AG04449 (cell line): ENCODE measurements at regions of chr9 and their contacts with region 1.

Region 1: DNA sequence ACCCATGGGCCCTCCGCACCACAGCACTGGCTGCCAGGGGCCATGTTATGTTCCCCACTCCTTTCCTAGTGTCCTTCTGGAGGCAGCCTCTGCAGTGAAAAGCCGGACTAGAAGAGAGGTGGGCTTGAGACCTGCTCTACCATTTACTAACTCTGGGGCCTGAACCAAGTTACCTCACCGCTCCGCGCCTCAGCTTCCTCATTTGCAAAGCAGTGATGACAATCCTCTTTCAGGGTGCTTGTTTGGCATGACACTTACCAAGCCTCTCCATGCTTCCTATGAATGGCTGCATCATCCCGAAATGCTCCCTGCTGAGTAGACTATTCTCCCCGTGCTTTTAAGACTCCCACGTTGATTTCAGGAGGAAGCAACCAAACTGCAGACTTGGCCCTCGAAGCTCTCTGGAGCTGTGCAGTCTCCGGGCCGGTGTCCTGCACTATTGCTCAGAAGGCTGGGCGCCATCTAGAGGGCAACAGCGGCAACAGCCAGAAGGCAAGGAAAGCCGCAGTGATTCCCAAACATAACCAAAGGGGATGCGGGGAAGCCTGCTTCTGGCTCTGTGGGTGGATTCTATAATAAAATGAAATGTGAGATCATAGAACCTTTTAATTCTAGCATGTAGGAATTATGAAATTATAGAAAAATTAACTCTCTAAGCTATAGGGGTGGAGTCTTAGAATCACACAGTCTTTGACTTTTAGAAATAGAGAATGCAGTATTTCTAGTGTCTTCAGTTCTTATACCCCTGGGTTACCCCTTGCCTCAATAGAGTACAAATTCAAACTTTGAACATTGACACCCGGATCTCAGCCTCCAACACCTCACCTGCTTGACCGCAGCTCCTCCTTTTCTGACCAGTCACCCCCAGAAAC is 599.8 kb upstream of the BRINP1 start:
- DNase-seq: peak; percentile 28
- H3K4me3 ChIP-seq: no peak overlapping the region
- CTCF ChIP-seq: peak; percentile 98

Region 2: DNA sequence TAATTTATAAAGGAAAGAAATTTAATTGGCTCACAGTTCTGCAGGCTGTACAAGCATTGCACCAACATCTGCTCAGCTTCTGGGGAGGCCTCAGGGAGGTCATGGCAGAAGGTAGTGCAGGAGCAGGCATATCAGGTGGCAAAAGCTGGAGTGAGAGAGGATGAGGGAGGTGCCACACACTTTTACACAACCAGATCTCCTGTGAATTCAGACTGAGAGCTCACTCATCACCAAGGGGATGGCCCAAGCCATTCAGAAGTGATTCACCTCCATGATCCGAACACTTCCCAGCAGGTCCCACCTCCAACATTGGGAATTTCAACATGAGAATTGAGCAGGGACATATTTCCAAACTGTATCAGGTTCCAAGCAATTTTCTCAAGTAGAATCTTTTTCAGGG is 515.1 kb before region 1 on chr9:
- CTCF ChIA-PET with region 1: no interaction called
- POLR2A ChIA-PET with region 1: no interaction called
- DNase-seq: no peak
- H3K4me3 ChIP-seq: no peak overlapping the region
- CTCF ChIP-seq: no peak

Region 3: GRCh38 chr9:119556129-119556875 is 412.8 kb before region 1 on chr9:
- CTCF ChIA-PET with region 1: interaction called, 97 read pairs
- POLR2A ChIA-PET with region 1: no interaction called
- DNase-seq: no peak
- H3K4me3 ChIP-seq: peak overlapping the region; percentile 50
- CTCF ChIP-seq: peak; percentile 93

Region 4: DNA sequence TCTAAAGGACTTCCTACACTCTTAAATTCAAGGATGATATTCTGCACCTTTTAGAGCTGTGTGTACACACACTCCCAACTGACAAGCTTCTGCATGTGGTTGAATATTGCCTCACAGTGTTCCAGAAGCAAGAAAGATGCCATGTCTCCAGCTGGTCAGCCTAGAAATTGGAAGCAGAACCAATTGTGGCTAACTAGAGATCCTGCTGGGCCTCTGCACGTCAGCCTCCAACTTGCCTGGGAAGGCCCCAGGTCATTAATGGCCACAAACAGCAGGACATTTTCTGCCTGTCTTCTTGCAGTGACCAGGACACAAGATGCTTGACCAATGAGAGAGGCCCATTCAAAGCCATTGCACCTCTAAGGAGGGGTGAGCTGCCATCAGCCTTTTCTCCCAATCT is 28.0 kb before region 1 on chr9:
- CTCF ChIA-PET with region 1: interaction called, 22 read pairs
- POLR2A ChIA-PET with region 1: no interaction called
- DNase-seq: no peak
- H3K4me3 ChIP-seq: no peak overlapping the region
- CTCF ChIP-seq: no peak

Region 5: DNA sequence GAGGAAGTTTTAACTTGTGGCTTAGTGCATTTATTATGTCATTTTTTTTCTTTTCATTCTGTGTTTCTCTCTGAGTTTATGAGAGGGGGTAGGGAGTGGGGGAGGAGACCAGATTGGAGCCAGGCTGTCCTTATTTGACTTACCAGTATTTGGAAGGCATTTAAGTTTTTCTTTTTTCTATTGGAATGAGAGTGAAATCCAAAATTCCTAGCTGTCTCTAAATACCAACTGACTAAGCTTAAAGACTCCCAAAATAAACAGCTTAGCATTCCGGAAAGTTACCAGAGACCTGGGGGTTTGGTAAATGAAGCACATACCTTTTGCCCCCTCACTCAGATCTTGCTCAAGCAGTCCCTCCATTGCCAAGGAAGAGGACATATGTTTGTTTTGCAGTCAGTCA is 18.0 kb before region 1 on chr9:
- CTCF ChIA-PET with region 1: interaction called, 22 read pairs
- POLR2A ChIA-PET with region 1: interaction called, 7 read pairs
- DNase-seq: peak; percentile 95
- H3K4me3 ChIP-seq: no peak overlapping the region
- CTCF ChIP-seq: no peak

Region 6: GRCh38 chr9:119986213-119986612 is 17.1 kb after region 1 on chr9:
- CTCF ChIA-PET with region 1: interaction called, 13 read pairs
- POLR2A ChIA-PET with region 1: no interaction called
- DNase-seq: no peak
- H3K4me3 ChIP-seq: no peak overlapping the region
- CTCF ChIP-seq: no peak